ENCODE measurements at regions of chr15 and their contacts with region 1.

Region 1: GRCh38 chr15:81265944-81266775 is 57.8 kb downstream of the STARD5 start:
- DNase-seq: peak; percentile 82
- H3K4me3 ChIP-seq: peak overlapping the region; percentile 9 to 51; a peak in 2 of 4 replicates
- H3K27ac ChIP-seq: no peak overlapping the region
- H3K4me1 ChIP-seq: peaks cover 5 to 11% of the 10 kb centered on the region in 2 experiments; a peak in 2 of 4 replicates
- H3K27me3 ChIP-seq: peaks cover 10% of the 10 kb centered on the region; the same call in 1 of the 2 replicates
- CTCF ChIP-seq: peak; percentile 84
- EP300 ChIP-seq: no peak
- RAD21 ChIP-seq: peak; percentile 95

Region 2: DNA sequence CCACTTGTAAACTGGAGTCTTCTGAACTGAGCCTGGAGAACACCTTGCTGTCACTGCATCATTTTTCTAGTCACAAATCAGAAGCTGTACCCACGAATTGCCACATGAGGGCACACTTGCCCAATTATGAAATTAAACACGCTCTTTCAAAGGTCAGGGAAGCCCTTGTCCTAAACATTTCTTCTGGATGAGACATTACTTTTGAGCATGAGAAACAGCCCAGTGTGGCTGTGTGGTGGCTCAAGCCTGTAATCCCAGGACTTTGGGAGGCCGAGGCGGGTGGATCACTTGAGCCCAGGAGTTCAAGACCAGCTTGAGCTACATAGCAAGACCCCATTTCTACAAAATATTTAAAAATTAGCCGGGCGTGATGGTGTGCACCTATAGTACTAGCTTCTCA is 159.6 kb before region 1 on chr15:
- CTCF ChIA-PET with region 1: interaction called, 451 read pairs
- POLR2A ChIA-PET with region 1: interaction called, 4 read pairs
- DNase-seq: peak; percentile 70
- H3K4me3 ChIP-seq: no peak overlapping the region; a peak in 1 of 4 replicates
- H3K27ac ChIP-seq: no peak overlapping the region
- H3K4me1 ChIP-seq: no peaks in the 10 kb centered on the region
- H3K27me3 ChIP-seq: peaks cover 5% of the 10 kb centered on the region; the same call in 1 of the 2 replicates
- CTCF ChIP-seq: peak; percentile 81
- EP300 ChIP-seq: no peak
- RAD21 ChIP-seq: peak; percentile 94

Region 3: GRCh38 chr15:81155375-81156218 is 110.6 kb before region 1 on chr15:
- CTCF ChIA-PET with region 1: interaction called, 395 read pairs
- POLR2A ChIA-PET with region 1: interaction called, 8 read pairs
- DNase-seq: peak; percentile 46
- H3K4me3 ChIP-seq: no peak overlapping the region
- H3K27ac ChIP-seq: no peak overlapping the region
- H3K4me1 ChIP-seq: peaks cover 0 to 9% of the 10 kb centered on the region in 2 experiments; a peak in 1 of 4 replicates
- H3K27me3 ChIP-seq: no peaks in the 10 kb centered on the region
- CTCF ChIP-seq: peak; percentile 55
- EP300 ChIP-seq: no peak
- RAD21 ChIP-seq: peak; percentile 82

Region 4: DNA sequence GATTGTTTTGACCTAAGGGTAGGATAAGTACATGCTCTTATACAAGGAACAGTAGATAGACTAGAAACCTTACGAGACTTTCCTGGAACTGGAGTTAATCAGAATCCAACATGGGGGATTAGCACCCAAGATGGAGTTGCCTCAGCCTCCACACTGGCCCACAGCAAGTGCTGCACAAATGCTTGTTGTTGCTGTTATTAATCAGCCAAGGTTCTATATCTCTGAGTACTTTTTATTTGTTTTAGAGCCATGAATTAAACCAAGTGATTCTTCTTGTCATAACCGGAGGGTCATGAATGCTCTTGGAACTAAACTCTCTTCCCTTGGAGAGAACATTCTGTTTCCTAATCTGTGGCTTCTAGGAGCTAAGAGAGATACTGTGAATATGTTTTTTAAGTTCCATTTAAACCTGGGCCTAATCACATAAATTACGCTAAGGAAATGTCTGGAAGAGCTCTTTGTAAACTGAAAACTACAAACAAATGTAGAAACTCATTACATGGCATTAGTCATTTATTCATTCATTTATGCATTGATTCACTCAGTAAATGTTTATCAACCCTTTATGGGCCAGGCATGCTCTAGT is 75.1 kb before region 1 on chr15:
- CTCF ChIA-PET with region 1: interaction called, 10 read pairs
- POLR2A ChIA-PET with region 1: no interaction called
- DNase-seq: no peak
- H3K4me3 ChIP-seq: no peak overlapping the region
- H3K27ac ChIP-seq: no peak overlapping the region
- H3K4me1 ChIP-seq: no peaks in the 10 kb centered on the region
- H3K27me3 ChIP-seq: no peaks in the 10 kb centered on the region
- CTCF ChIP-seq: no peak
- EP300 ChIP-seq: no peak
- RAD21 ChIP-seq: no peak

Region 5: GRCh38 chr15:81293728-81294515 is 27.8 kb after region 1 on chr15:
- CTCF ChIA-PET with region 1: interaction called, 28 read pairs
- POLR2A ChIA-PET with region 1: no interaction called
- DNase-seq: peak; percentile 50
- H3K4me3 ChIP-seq: no peak overlapping the region
- H3K27ac ChIP-seq: no peak overlapping the region
- H3K4me1 ChIP-seq: peaks cover 7 to 9% of the 10 kb centered on the region in 2 experiments; a peak in 2 of 4 replicates
- H3K27me3 ChIP-seq: peaks cover 10% of the 10 kb centered on the region
- CTCF ChIP-seq: no peak
- EP300 ChIP-seq: no peak
- RAD21 ChIP-seq: no peak

Region 6: GRCh38 chr15:81386947-81387346 is 120.8 kb after region 1 on chr15:
- CTCF ChIA-PET with region 1: interaction called, 36 read pairs
- POLR2A ChIA-PET with region 1: no interaction called
- DNase-seq: no peak
- H3K4me3 ChIP-seq: no peak overlapping the region
- H3K27ac ChIP-seq: no peak overlapping the region
- H3K4me1 ChIP-seq: peaks cover 0 to 7% of the 10 kb centered on the region in 2 experiments; a peak in 2 of 4 replicates
- H3K27me3 ChIP-seq: peaks cover 3% of the 10 kb centered on the region; the same call in 1 of the 2 replicates
- CTCF ChIP-seq: no peak
- EP300 ChIP-seq: no peak
- RAD21 ChIP-seq: no peak

Region 7: DNA sequence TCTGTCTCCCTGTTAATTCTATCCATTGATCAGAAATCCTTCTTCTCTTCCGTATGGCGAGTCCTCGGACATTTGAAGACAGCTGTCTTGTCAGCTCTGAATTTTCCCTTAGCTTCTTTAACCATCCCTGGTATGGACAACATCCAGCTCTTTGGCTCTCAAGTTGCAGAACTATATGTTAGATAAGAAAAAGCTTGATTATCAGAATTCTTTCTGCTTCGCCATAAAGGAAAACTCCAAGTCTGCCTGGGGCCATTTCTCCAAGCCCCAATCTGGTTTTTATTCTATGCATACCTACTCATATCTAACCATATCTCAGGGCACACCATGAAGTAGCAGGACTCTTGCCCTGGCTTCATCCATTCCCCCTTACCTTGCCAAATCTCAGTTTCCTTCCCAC is 323.5 kb after region 1 on chr15:
- CTCF ChIA-PET with region 1: no interaction called
- POLR2A ChIA-PET with region 1: no interaction called
- DNase-seq: no peak
- H3K4me3 ChIP-seq: no peak overlapping the region
- H3K27ac ChIP-seq: no peak overlapping the region
- H3K4me1 ChIP-seq: peaks cover 0 to 3% of the 10 kb centered on the region in 2 experiments; a peak in 1 of 4 replicates
- H3K27me3 ChIP-seq: no peaks in the 10 kb centered on the region
- CTCF ChIP-seq: no peak
- EP300 ChIP-seq: no peak
- RAD21 ChIP-seq: no peak

Region 8: GRCh38 chr15:81633889-81634288 is 367.7 kb after region 1 on chr15:
- CTCF ChIA-PET with region 1: no interaction called
- POLR2A ChIA-PET with region 1: no interaction called
- DNase-seq: no peak
- H3K4me3 ChIP-seq: no peak overlapping the region
- H3K27ac ChIP-seq: no peak overlapping the region
- H3K4me1 ChIP-seq: no peaks in the 10 kb centered on the region
- H3K27me3 ChIP-seq: no peaks in the 10 kb centered on the region
- CTCF ChIP-seq: no peak
- EP300 ChIP-seq: no peak
- RAD21 ChIP-seq: no peak

Measured in SK-N-SH (cell line).